Caco-2 (cell line): ENCODE measurements at regions of chr2 and their contacts with region 1.

Region 1: DNA sequence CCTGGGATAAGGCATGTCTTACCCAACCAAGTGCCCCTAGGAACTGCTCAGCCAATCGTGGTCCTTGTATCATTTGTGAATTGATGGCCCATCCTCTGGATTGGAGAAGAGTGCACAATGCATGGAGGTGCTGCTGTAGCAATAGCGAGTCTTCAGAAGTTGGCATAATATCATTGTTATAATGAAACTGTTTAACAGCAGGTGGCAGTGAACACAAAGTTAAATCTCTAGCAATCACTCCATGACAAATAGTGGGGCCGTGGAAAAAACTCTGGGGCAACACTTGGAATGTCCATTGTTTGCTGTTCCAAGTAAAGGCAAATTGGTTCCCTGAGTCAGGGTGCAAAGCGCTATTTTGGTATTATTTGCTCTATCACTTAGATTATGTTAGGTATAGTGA is 11.4 kb downstream of the REG1A start:
- DNase-seq: no peak
- H3K4me3 ChIP-seq: no peak overlapping the region
- H3K4me3 Mint-ChIP-seq: no peak overlapping the region
- H3K27ac Mint-ChIP-seq: no peak overlapping the region
- H3K4me1 ChIP-seq: no peaks in the 10 kb centered on the region
- H3K4me1 Mint-ChIP-seq: no peaks in the 10 kb centered on the region
- H3K27me3 ChIP-seq: no peaks in the 10 kb centered on the region
- H3K27me3 Mint-ChIP-seq: peaks cover 4% of the 10 kb centered on the region
- CTCF ChIP-seq: no peak

Region 2: GRCh38 chr2:79041032-79041448 is 90.6 kb before region 1 on chr2:
- CTCF ChIA-PET with region 1: interaction called, 3 read pairs
- POLR2A ChIA-PET with region 1: no interaction called
- intact Hi-C with region 1: loop called (anchors 2 kb)
- DNase-seq: peak in 1 of 2 experiments; percentile 18
- H3K4me3 ChIP-seq: no peak overlapping the region
- H3K4me3 Mint-ChIP-seq: no peak overlapping the region
- H3K27ac Mint-ChIP-seq: no peak overlapping the region
- H3K4me1 ChIP-seq: no peaks in the 10 kb centered on the region
- H3K4me1 Mint-ChIP-seq: no peaks in the 10 kb centered on the region
- H3K27me3 ChIP-seq: no peaks in the 10 kb centered on the region
- H3K27me3 Mint-ChIP-seq: peaks cover 6% of the 10 kb centered on the region
- CTCF ChIP-seq: peak; percentile 66 to 75

Region 3: GRCh38 chr2:79162132-79162531 is 30.4 kb after region 1 on chr2:
- CTCF ChIA-PET with region 1: no interaction called
- POLR2A ChIA-PET with region 1: no interaction called
- intact Hi-C with region 1: loop called (anchors 2 kb)
- DNase-seq: peak in 1 of 2 experiments; percentile 35
- H3K4me3 ChIP-seq: no peak overlapping the region
- H3K4me3 Mint-ChIP-seq: no peak overlapping the region
- H3K27ac Mint-ChIP-seq: no peak overlapping the region
- H3K4me1 ChIP-seq: peaks cover 4% of the 10 kb centered on the region; the same call in 1 of the 2 replicates
- H3K4me1 Mint-ChIP-seq: no peaks in the 10 kb centered on the region
- H3K27me3 ChIP-seq: no peaks in the 10 kb centered on the region
- H3K27me3 Mint-ChIP-seq: no peaks in the 10 kb centered on the region
- CTCF ChIP-seq: no peak